HCT116 (cell line): ENCODE measurements at regions of chr11 and their contacts with region 1.

Region 1: DNA sequence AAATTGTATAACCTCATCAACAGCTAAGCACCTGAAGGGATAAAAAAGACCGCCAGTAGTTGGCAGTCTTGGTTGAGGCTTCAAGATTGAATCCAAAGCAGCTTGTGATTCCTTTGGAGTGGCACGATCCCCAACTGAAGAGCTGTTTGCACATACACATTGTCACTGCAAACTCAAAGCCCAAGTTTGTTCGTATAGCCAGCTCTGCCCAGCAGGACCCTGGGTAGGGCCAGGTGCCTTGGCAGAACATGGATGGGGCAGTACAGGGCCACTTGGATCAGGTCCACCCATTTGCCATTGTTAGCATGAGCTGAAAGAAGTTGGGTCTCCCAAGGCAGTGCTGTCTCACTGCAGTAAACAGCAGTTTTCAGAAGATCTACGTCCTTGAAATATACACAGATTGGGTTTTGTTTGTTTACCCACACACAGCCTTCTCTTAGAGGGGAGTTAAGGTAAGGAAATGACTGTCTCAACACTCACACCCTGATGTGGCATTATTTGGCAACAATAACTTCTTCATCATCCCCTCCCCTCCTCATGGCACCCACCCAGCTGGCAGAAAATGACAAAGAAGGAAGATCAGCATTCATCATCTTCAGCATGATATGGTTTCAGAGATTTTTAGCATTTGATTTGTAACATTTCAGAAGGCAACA is 132.9 kb downstream of the COMMD9 start:
- DNase-seq: no peak
- ATAC-seq: no peak
- H3K4me3 ChIP-seq: no peak overlapping the region
- H3K27ac ChIP-seq: no peak overlapping the region
- H3K4me1 ChIP-seq: peaks cover 0 to under 1% of the 10 kb centered on the region in 2 experiments; a peak in 1 of 4 replicates
- H3K27me3 ChIP-seq: no peaks in the 10 kb centered on the region
- CTCF ChIP-seq: 0 out of 6 replicates have a peak, but pooled peaks of 1 of the 3 experiments have one; percentile 1
- POLR2A ChIP-seq: no peak
- RAD21 ChIP-seq: no peak

Region 2: DNA sequence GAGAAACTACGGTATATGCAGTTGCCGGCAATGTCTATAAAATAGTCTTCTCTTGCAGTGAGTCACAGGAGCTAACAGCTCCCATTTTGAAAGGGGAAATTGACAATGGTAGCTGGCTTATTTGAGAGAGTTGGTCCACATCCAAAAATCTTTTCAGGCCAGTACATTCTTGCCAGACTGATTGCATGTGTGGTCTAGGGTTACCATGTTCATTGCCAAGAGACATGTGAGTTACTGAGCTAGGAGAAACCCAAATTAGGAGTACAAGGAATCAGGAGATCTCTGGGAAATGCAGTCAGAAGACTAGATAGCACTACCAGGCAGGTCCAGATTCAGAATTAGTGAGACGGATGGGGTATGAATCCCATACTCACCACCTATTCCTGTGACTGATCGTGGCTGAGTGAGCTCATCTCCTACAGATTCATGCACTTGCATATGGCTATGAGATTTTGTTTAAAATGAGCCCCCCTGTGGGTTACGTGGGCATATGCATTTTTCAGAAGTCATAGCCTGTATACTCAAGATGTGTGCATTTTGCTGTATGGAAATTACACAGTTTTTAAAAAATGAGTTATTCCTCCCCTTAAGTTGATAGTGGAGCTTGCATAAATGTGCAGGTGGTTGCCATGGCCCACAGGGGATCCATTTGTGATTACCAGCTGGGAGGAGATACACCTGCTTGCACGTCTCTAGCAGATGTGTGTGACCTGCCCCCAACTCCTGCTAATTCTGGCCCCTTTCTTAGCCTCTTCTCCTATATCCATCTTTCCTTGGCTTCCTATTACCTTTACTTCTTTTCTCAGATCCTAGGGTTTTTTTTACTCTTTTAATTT is 30.3 kb after region 1 on chr11:
- CTCF ChIA-PET with region 1: no interaction called
- POLR2A ChIA-PET with region 1: no interaction called
- RAD21 ChIA-PET with region 1: no interaction called
- intact Hi-C with region 1: loop called (anchors 1 kb)
- DNase-seq: no peak
- ATAC-seq: no peak
- H3K4me3 ChIP-seq: no peak overlapping the region
- H3K27ac ChIP-seq: no peak overlapping the region
- H3K4me1 ChIP-seq: no peaks in the 10 kb centered on the region
- H3K27me3 ChIP-seq: no peaks in the 10 kb centered on the region
- CTCF ChIP-seq: no peak
- POLR2A ChIP-seq: no peak
- RAD21 ChIP-seq: no peak

Region 3: DNA sequence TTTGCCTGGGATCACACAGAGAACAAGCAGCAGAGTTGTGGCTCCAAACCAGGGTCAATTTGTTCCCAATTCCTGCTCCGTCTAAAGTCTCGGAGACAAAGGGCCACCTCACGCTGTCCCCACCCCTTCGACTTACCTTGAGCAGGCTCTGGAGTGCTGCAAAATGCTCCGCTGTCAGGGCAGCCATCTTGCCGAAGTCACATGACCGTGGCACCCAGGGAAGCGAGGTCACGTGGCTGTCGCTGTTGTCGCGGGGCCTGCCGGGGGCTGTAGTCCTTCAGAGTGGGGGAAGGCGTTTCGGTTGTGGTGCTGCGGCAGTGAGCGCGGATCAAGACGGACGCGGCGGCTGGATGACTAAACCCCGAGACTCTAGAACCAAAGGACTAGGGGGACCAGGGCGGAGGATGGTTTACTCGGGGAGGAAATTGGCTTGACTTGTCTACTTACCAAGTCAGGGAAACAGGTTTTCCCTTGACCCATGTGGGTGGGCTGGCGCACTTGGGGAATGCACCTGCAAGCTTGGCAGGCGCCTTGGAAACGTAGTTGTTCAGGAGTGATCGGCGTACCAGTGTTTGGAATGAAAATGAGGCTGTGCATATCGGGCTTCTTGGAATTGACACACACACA is 133.1 kb after region 1 on chr11 and contains the start of gene COMMD9:
- CTCF ChIA-PET with region 1: no interaction called
- POLR2A ChIA-PET with region 1: no interaction called
- RAD21 ChIA-PET with region 1: no interaction called
- intact Hi-C with region 1: no loop called
- DNase-seq: peak; percentile 88
- ATAC-seq: peak; percentile 96
- H3K4me3 ChIP-seq: peak within 1 kb of the TSS; percentile 66 to 74
- H3K27ac ChIP-seq: no peak within 1 kb of the TSS
- H3K4me1 ChIP-seq: peaks cover 0 to 12% of the 10 kb centered on the region in 2 experiments; a peak in 1 of 4 replicates
- H3K27me3 ChIP-seq: no peaks in the 10 kb centered on the region
- CTCF ChIP-seq: no peak
- POLR2A ChIP-seq: no peak
- RAD21 ChIP-seq: no peak
- total RNA-seq, gene COMMD9: 33.3 TPM